ENCODE measurements at regions of chr12 and their contacts with region 1.

Region 1: DNA sequence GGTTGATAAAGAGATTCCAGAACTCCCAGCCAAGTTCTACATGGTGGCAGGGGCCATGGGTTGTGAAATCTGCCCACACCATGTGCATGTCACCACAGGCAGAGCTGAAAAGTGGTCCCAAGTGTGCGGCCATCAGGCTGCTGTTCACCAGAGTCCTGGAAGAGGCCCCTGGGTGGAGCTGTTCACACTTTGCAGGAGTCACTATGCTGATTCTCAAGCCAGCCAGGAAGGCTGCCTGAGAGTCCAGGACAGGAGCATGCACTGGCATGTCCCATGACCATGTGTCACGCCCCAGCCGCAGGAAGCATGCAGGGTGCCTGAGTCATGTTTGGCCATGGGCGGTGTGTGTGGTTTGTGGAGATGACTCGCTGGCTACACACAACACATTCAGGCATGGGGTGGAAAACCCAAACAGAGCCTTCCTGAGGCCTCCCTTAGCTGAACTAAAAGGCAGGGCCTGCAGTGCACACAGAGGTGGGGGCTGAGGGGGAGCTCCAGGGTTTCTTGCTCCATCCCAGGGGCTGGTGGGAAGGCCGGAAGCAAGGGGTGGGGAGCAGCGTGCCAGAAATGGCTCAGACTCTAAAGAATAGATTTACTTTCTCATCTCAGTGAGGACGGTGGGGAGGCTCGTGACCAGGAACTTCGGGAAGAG is 19.4 kb downstream of the ABCB9 start:
- DNase-seq: no peak
- ATAC-seq: peak; percentile 18; the same call in 1 of the 2 replicates
- H3K4me3 Mint-ChIP-seq: no peak overlapping the region
- H3K27ac Mint-ChIP-seq: no peak overlapping the region
- H3K4me1 Mint-ChIP-seq: no peaks in the 10 kb centered on the region
- H3K27me3 Mint-ChIP-seq: no peaks in the 10 kb centered on the region
- CTCF ChIP-seq: no peak

Region 2: GRCh38 chr12:122767691-122768090 is 179.1 kb before region 1 on chr12:
- CTCF ChIA-PET with region 1: no interaction called
- POLR2A ChIA-PET with region 1: interaction called, 10 read pairs
- DNase-seq: no peak
- ATAC-seq: no peak
- H3K4me3 Mint-ChIP-seq: no peak overlapping the region
- H3K27ac Mint-ChIP-seq: no peak overlapping the region
- H3K4me1 Mint-ChIP-seq: no peaks in the 10 kb centered on the region
- H3K27me3 Mint-ChIP-seq: no peaks in the 10 kb centered on the region
- CTCF ChIP-seq: no peak